Endothelial cell of umbilical vein (primary cell): ENCODE measurements at regions of chr16 and their contacts with region 1.

Region 1: DNA sequence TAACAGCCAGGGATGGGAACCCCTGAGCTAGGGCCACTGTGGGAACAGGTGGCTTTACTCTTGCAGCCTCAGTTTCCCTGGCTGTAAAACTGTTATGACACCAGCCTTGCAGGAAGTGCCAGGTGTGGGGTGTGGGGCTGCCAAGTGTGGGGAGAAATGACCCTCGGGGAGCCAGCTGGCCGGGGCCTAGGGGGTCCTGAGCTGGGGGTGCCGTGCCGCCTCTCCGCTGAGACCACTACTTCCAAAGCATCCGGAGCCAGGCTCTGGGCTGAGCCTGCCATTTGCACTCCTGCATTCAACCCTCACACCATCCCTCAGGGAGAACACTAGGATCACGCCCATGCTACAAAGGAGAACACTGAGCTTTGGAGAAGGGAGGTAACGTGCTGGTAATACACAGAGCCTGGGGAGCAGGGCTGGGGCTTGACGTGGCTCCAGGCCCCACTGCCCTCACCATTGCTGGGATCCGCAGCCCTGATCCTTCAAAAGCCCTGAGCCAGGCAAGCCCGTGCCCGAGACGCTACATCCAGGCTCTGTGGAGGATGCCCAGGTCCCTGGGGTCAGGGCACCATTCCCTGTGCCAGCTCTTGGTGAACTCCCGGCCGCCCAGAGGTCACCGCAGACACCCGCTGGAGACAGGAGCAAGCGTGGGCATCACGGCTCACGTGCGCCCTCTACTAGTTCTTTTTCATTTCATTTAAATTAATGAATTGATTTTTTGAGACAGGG is 28.8 kb upstream of the GINS2 start:
- DNase-seq: peak; percentile 57
- H3K4me3 ChIP-seq: no peak overlapping the region
- H3K27ac ChIP-seq: no peak overlapping the region
- H3K4me1 ChIP-seq: peaks cover 25% of the 10 kb centered on the region
- H3K27me3 ChIP-seq: no peaks in the 10 kb centered on the region
- CTCF ChIP-seq: peak; percentile 66 to 70
- POLR2A ChIP-seq: no peak

Region 2: DNA sequence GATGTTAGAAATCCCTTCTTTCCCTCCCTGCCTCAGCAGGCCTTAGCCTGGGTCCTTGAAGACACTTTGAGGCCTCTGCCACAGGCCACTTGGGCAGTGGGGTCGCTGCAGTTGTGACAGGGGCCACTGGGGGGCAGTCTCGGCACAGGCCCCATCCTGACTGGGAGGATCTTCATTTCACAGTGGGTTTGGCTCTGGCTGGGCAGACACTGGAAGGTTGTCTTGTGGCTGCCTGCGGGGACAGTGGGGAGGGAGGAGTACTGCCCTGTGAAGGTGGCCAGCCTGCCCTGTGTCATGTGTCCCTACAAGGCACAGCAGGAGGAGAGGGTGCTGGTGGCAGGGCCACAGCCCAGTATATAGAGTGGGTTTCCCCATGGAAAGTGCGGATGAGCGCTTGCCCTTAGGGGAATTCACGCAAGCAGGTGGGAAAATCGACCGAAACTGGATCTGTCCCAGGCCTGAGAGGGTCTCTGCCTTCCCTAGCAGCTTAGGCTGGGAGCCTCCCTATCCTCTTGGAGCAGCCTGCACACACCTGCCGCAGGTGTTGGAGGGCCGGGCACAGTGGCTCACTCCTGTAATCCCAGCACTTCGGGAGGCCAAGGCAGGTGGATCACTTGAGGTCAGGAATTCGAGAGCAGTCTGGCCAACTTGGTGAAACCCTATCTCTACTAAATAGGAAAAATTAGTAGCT is 57.6 kb before region 1 on chr16:
- CTCF ChIA-PET with region 1: interaction called, 119 read pairs
- POLR2A ChIA-PET with region 1: no interaction called
- dilution Hi-C with region 1: no loop called
- intact Hi-C with region 1: loop called (anchors 1 kb)
- DNase-seq: peak; percentile 70
- H3K4me3 ChIP-seq: no peak overlapping the region
- H3K27ac ChIP-seq: no peak overlapping the region
- H3K4me1 ChIP-seq: no peaks in the 10 kb centered on the region
- H3K27me3 ChIP-seq: no peaks in the 10 kb centered on the region
- CTCF ChIP-seq: peak; percentile 96 to 98
- POLR2A ChIP-seq: no peak

Region 3: GRCh38 chr16:85675251-85675927 is 42.2 kb before region 1 on chr16:
- CTCF ChIA-PET with region 1: interaction called, 73 read pairs
- POLR2A ChIA-PET with region 1: no interaction called
- dilution Hi-C with region 1: no loop called
- intact Hi-C with region 1: loop called (anchors 1 kb)
- DNase-seq: peak; percentile 41
- H3K4me3 ChIP-seq: no peak overlapping the region
- H3K27ac ChIP-seq: no peak overlapping the region
- H3K4me1 ChIP-seq: peaks cover 14% of the 10 kb centered on the region
- H3K27me3 ChIP-seq: no peaks in the 10 kb centered on the region
- CTCF ChIP-seq: peak; percentile 29 to 46
- POLR2A ChIP-seq: no peak

Region 4: DNA sequence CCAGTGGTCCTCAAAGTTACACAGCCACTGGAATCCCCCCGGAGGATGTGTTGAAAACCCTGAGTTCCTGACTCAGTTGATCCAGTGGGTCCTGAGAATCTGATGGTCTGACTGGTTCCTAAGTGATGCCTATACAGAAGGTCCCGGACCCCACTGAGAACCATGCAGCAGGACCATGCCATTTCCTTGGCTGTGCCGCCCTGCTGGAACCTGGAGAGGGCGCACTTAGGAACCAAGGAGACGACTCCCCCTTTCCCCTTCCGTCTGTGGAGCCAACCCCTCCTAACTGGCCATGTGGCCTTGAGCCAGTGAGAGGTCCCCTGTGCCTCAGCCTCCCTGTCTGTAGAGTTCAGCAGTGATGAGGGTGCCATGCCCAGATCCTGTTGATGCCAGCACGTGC is 11.3 kb after region 1 on chr16:
- CTCF ChIA-PET with region 1: interaction called, 12 read pairs
- POLR2A ChIA-PET with region 1: no interaction called
- dilution Hi-C with region 1: no loop called
- intact Hi-C with region 1: no loop called
- DNase-seq: no peak
- H3K4me3 ChIP-seq: no peak overlapping the region
- H3K27ac ChIP-seq: no peak overlapping the region
- H3K4me1 ChIP-seq: no peaks in the 10 kb centered on the region
- H3K27me3 ChIP-seq: no peaks in the 10 kb centered on the region
- CTCF ChIP-seq: peak; percentile 12 to 25
- POLR2A ChIP-seq: no peak

Region 5: GRCh38 chr16:85750827-85751697 is 33.5 kb after region 1 on chr16 and contains the start of gene C16orf74:
- CTCF ChIA-PET with region 1: interaction called, 3 read pairs
- POLR2A ChIA-PET with region 1: no interaction called
- dilution Hi-C with region 1: no loop called
- intact Hi-C with region 1: loop called (anchors 1 kb)
- DNase-seq: peak; percentile 34
- H3K4me3 ChIP-seq: peak within 1 kb of the TSS; percentile 35 to 49 (median 39)
- H3K27ac ChIP-seq: peak within 1 kb of the TSS; percentile 50
- H3K4me1 ChIP-seq: peaks cover 28% of the 10 kb centered on the region
- H3K27me3 ChIP-seq: no peaks in the 10 kb centered on the region
- CTCF ChIP-seq: no peak
- POLR2A ChIP-seq: no peak
- total RNA-seq, gene C16orf74: 30.9 and 38.7 TPM in 2 replicates